PC-9 (cell line): ENCODE measurements at regions of chr11 and their contacts with region 1.

Region 1: GRCh38 chr11:18395735-18396504 is 1.6 kb downstream of the LDHA start:
- DNase-seq: peak; percentile 99 to 100
- H3K4me3 ChIP-seq: peak overlapping the region; percentile 79
- H3K27ac ChIP-seq: peak overlapping the region; percentile 84
- H3K4me1 ChIP-seq: peaks cover 33% of the 10 kb centered on the region
- H3K27me3 ChIP-seq: no peaks in the 10 kb centered on the region
- CTCF ChIP-seq: no peak

Region 2: GRCh38 chr11:18243783-18244362 is 152.0 kb before region 1 on chr11:
- CTCF ChIA-PET with region 1: no interaction called
- POLR2A ChIA-PET with region 1: interaction called, 3 read pairs
- intact Hi-C with region 1: loop called (anchors 5 kb)
- DNase-seq: peak; percentile 57 to 66
- H3K4me3 ChIP-seq: no peak overlapping the region
- H3K27ac ChIP-seq: no peak overlapping the region
- H3K4me1 ChIP-seq: peaks cover 6% of the 10 kb centered on the region; the same call in 1 of the 2 replicates
- H3K27me3 ChIP-seq: no peaks in the 10 kb centered on the region
- CTCF ChIP-seq: peak; percentile 97

Region 3: DNA sequence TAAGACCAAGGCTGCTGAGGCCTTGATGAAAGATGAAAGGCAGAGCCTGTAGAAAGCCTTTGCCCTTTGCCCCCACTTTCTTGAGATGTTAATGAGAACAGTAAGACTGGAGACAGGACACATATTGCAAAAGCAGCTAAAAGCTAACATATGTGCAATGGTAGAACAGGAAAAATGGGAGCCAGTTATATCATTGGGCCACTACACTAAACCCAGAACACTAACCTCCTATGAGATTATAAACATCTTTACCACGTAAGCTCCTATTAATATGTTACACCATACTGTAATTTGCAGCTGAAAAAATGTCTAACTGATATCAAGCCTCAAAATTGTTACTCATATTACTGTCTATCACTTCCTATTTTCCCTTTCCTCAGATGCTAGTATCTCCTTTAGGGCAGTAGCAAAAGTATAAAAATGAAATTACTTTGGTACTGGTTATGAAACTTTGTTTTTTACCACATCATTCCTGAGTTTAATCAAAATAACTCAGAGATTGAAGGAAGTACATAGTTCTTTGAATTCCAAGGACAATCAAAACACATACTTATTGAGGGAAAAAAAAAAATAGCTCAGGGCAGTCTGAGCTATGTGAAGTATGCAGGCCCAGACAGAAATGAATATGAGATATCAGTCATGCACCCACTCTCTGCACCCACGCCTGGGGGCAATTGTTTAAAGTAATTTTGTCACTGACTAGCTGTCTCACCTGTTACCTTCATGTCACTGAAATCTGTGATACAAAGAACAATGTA is 83.1 kb before region 1 on chr11:
- CTCF ChIA-PET with region 1: interaction called, 3 read pairs
- POLR2A ChIA-PET with region 1: interaction called, 12 read pairs
- intact Hi-C with region 1: loop called (anchors 1 kb)
- DNase-seq: peak; percentile 85 to 99
- H3K4me3 ChIP-seq: peak overlapping the region; percentile 9; the same call in 1 of the 2 replicates
- H3K27ac ChIP-seq: peak overlapping the region; percentile 90
- H3K4me1 ChIP-seq: peaks cover 65% of the 10 kb centered on the region
- H3K27me3 ChIP-seq: no peaks in the 10 kb centered on the region
- CTCF ChIP-seq: no peak

Region 4: DNA sequence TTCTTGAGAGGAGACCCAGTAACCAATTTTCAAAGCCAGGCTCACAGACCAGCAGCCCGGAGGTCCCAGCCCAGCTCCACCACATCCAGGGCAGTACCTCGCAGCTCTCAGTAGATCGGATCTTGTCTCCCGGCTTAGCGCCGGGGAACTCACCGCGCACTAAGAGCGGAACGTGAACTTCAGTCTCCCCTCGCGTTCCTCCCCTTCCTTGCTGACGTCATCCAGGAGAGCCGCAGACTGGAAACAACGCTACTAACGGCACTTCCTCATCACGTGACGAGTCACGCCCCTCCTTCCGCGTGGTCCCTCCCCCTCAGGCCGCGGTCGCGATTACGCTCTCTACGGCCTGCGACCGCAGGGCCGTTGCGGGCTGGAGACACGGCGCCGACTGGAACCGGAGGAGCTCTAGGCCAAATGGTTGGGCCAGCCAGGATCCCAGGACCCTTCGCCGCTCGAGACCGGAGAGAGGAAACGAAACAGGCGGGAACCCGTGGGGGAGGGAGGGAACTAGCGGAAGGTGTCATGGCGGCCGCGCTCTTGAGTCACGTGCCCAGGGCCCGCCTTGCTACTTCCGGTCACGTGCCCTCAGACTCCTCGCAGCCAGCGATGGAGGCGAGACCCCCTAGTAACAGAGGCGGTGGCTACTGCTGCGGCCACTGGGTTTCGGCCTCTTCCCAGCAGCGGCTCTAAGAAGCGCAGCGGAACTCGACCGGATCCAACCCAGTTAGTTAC is 73.8 kb before region 1 on chr11 and contains the starts of genes GTF2H1 and HPS5:
- CTCF ChIA-PET with region 1: interaction called, 3 read pairs
- POLR2A ChIA-PET with region 1: interaction called, 19 read pairs
- intact Hi-C with region 1: loop called (anchors 1 kb)
- DNase-seq: peak; percentile 95 to 97
- H3K4me3 ChIP-seq: peak within 1 kb of the TSS; percentile 82
- H3K27ac ChIP-seq: peak within 1 kb of the TSS; percentile 93
- H3K4me1 ChIP-seq: peaks cover 45% of the 10 kb centered on the region
- H3K27me3 ChIP-seq: no peaks in the 10 kb centered on the region
- CTCF ChIP-seq: no peak
- total RNA-seq, gene GTF2H1: 72.9 and 89.1 TPM in 2 replicates
- total RNA-seq, gene HPS5: 35.2 and 39.2 TPM in 2 replicates

Region 5: DNA sequence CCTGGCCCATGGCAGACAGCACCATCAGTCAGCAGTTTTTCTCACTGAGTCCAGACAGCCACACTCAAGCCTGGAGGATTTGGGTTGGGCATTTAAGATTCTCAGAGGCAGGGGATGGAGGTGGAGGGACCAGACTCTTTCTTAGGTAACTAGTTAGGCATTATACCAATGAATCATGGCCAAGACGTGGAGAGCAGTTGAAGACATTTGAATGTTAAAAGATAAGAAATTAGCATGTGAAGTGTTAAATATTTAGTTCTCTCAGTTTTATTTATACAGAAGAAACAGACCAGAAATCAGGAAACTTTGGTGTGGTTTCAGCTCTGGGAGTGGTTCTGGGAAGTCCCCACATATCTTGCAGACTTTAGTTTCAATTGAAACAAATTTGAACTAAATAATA is 63.6 kb before region 1 on chr11:
- CTCF ChIA-PET with region 1: no interaction called
- POLR2A ChIA-PET with region 1: no interaction called
- intact Hi-C with region 1: no loop called
- DNase-seq: no peak
- H3K4me3 ChIP-seq: no peak overlapping the region
- H3K27ac ChIP-seq: 0 out of 2 replicates have a peak overlapping the region, but pooled peaks have one; percentile 6
- H3K4me1 ChIP-seq: peaks cover 17% of the 10 kb centered on the region
- H3K27me3 ChIP-seq: no peaks in the 10 kb centered on the region
- CTCF ChIP-seq: no peak

Region 6: GRCh38 chr11:18383388-18384156 is 12.3 kb before region 1 on chr11:
- CTCF ChIA-PET with region 1: interaction called, 7 read pairs
- POLR2A ChIA-PET with region 1: interaction called, 61 read pairs
- intact Hi-C with region 1: loop called (anchors 1 kb)
- DNase-seq: peak; percentile 88 to 100
- H3K4me3 ChIP-seq: peak overlapping the region; percentile 30; the same call in 1 of the 2 replicates
- H3K27ac ChIP-seq: peak overlapping the region; percentile 97
- H3K4me1 ChIP-seq: peaks cover 45% of the 10 kb centered on the region
- H3K27me3 ChIP-seq: no peaks in the 10 kb centered on the region
- CTCF ChIP-seq: no peak

Region 7: DNA sequence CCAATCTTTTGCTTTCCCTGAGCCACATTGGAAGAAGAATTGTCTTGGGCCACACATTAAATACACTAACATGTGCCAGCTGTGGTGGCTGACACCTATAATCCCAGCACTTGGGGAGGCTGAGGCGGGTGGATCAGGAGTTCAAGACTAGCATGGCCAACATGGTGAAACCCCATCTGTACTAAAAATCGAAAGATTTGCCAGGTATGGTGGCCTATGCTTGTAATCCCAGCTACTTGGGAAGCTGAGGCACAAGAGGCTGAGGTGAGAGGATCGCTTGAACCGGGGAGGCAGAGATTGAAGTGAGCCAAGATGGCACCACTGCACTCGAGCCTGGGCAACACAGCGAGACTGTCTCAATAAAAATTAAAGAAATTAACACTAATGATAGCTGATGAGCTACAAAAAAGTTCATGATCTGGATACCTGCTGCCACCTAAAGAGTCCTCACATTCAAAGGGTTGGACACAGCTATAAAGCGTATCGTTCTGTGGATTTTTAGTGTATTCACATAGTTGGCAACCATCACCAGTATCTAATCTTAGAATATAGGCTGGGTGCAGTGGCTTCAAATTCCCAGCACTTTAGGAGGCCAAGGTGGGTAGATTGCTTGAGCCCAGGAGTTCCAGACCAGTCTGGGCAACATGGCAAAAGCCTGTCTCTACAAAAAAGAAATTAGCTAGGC is 12.8 kb after region 1 on chr11:
- CTCF ChIA-PET with region 1: no interaction called
- POLR2A ChIA-PET with region 1: interaction called, 11 read pairs
- intact Hi-C with region 1: no loop called
- DNase-seq: no peak
- H3K4me3 ChIP-seq: no peak overlapping the region
- H3K27ac ChIP-seq: peak overlapping the region; percentile 63
- H3K4me1 ChIP-seq: peaks cover 21% of the 10 kb centered on the region
- H3K27me3 ChIP-seq: no peaks in the 10 kb centered on the region
- CTCF ChIP-seq: no peak

Region 8: DNA sequence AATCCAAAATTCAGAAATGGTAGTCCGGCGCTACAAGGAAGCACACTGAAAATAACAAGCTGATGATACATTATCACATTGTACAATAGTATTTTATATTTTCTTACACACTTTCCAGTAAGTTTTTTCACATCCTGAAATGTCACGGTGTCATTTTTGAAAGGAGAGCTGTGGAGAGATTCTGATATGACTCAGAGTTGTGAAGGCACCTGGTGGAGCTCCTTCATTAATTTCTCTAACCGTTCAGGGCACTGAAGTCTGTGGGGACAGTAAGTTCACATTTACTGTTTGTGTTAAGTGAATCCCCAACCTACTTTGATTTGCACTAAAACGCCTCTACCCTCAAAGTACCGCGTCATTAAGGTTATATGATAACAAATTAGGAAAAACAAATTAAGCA is 73.0 kb after region 1 on chr11:
- CTCF ChIA-PET with region 1: interaction called, 11 read pairs
- POLR2A ChIA-PET with region 1: no interaction called
- intact Hi-C with region 1: no loop called
- DNase-seq: no peak
- H3K4me3 ChIP-seq: no peak overlapping the region
- H3K27ac ChIP-seq: no peak overlapping the region
- H3K4me1 ChIP-seq: no peaks in the 10 kb centered on the region
- H3K27me3 ChIP-seq: no peaks in the 10 kb centered on the region
- CTCF ChIP-seq: no peak